Activated CD4-positive, alpha-beta T cell treated with anti-CD3 and anti-CD28 coated beads for 36 hours (primary cell): ENCODE measurements at regions of chr20 and their contacts with region 1.

Region 1: GRCh38 chr20:49982346-49983122 is at the start of gene SNAI1:
- DNase-seq: peak; percentile 89
- ATAC-seq: peak; percentile 91
- H3K4me3 Mint-ChIP-seq: peak within 1 kb of the TSS; percentile 52
- H3K27ac Mint-ChIP-seq: peak within 1 kb of the TSS; percentile 26
- H3K4me1 Mint-ChIP-seq: peaks cover 15% of the 10 kb centered on the region
- H3K27me3 Mint-ChIP-seq: peaks cover 7% of the 10 kb centered on the region
- total RNA-seq, gene SNAI1: 0.25 to 0.34 TPM

Region 2: DNA sequence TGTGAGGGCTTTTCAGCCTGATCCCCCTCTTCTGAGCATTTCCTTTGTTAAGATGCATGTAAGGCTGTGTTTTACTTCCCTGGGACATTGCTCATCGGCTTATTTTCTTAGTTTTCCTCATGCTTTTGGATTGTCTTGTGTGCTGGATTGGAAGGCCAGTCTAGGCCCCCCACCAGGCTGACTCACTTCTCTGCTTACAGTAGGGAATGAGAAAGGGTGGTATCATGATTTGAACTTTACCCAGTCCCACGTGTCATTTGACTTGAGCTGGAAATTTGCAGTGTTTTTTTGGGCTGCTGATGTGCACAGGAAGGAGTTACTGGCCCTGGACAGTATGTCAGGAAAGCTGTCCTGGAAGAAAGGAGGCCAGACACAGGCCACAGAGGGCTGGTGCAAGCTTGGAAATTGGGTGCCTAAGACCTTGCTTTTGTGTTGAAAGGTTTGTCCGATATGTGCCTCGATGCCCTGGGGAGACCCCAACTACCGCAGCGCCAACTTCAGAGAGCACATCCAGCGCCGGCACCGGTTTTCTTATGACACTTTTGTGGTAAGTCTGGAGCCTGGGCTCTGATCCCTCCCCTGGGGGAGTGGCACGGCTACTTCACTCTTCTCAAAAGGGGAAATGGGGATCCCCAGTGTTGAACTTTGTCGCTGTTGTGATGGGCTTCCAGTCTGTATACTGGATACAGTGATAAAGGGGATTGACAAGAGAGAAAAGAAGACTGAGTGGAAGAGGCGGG is 33.6 kb before region 1 on chr20:
- CTCF ChIA-PET with region 1: interaction called, 11 read pairs
- POLR2A ChIA-PET with region 1: no interaction called
- intact Hi-C with region 1: no loop called
- DNase-seq: no peak
- ATAC-seq: no peak
- H3K4me3 Mint-ChIP-seq: no peak overlapping the region
- H3K27ac Mint-ChIP-seq: no peak overlapping the region
- H3K4me1 Mint-ChIP-seq: peaks cover 20% of the 10 kb centered on the region
- H3K27me3 Mint-ChIP-seq: no peaks in the 10 kb centered on the region

Region 3: DNA sequence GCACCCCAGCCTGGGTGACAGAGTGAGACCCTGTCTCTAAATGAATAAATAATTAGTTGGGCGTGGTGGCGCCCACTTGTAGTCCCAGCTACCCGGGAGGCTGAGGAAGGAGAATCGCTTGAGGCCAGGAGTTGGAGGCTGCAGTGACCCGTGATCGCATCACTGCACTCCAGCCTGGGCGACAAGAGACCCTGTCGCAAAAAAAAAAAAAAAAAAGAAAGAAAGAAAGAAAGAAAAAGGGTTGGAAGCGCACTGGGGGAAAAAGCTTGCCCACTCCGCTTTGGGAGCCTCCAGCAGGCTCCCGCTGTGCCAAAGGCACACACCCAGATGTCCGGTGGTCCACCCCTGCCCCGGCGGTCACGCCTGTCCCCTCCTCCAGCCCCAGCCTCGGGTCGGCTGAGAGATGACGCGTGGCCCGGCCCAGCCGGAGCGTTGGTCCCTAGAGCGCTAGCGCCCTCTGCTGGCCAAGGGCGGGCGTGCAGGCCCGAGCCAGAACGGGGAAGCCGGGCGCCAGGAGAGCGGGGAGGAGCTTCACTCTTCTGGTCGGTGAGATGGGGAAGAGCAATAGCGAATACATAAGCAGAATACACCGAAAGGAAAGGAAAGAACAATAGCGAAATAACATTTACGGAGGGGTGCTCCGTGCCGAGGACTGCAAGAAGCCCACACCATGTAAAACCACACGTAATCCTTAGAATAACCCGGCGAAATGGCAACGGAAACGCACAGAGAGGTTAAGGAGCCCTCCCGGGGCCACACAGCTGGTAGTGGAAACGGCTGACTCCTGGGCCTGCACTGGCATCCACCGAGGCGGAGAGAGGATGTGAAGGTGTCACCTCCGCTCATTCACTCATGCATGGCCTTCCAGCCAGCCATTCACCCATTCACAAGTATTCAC is 88.7 kb after region 1 on chr20:
- CTCF ChIA-PET with region 1: interaction called, 224 read pairs
- POLR2A ChIA-PET with region 1: interaction called, 4 read pairs
- intact Hi-C with region 1: loop called (anchors 1 kb)
- DNase-seq: peak; percentile 95
- ATAC-seq: peak; percentile 99
- H3K4me3 Mint-ChIP-seq: peak overlapping the region; percentile 61
- H3K27ac Mint-ChIP-seq: no peak overlapping the region
- H3K4me1 Mint-ChIP-seq: peaks cover 4% of the 10 kb centered on the region
- H3K27me3 Mint-ChIP-seq: no peaks in the 10 kb centered on the region

Region 4: DNA sequence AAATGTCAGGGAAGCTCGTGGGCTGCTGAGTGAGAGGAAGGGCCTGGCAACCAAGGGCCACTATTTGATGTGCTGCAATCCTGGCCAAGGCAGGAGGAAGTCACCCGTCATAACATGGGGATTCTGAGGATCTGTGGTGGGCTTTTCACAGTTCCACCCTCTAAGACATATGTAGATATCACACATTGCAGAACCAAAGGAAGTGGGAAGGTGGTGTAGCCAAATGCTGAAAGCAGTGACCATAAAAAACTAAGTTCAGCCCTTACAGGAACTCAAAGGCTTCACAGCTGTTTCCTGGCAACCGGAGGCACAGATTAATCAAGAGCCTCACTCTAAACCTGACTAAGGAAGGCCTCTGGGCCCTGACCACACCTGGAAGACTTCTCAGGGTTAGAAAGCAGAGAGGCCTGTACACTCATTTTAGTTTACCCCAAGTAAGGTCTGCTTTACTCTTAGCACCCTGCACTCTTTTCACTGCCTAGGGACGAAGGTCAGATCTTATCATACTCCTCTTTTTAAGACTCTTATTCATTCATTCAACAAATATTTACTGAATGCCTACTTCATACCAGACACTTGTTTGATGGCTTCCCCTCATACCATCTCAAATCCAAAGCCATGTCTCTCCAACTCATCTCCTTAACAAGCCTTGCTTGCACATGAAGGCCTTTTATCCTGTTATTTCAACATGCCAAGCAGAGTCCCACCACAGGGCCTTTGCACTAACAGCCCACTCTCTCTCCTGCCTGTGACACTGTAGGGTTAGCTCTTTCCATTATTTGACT is 127.8 kb after region 1 on chr20:
- CTCF ChIA-PET with region 1: interaction called, 4 read pairs
- POLR2A ChIA-PET with region 1: interaction called, 16 read pairs
- intact Hi-C with region 1: no loop called
- DNase-seq: peak; percentile 69
- ATAC-seq: peak; percentile 49
- H3K4me3 Mint-ChIP-seq: peak overlapping the region; percentile 93
- H3K27ac Mint-ChIP-seq: peak overlapping the region; percentile 92
- H3K4me1 Mint-ChIP-seq: peaks cover 82% of the 10 kb centered on the region
- H3K27me3 Mint-ChIP-seq: no peaks in the 10 kb centered on the region

Region 5: DNA sequence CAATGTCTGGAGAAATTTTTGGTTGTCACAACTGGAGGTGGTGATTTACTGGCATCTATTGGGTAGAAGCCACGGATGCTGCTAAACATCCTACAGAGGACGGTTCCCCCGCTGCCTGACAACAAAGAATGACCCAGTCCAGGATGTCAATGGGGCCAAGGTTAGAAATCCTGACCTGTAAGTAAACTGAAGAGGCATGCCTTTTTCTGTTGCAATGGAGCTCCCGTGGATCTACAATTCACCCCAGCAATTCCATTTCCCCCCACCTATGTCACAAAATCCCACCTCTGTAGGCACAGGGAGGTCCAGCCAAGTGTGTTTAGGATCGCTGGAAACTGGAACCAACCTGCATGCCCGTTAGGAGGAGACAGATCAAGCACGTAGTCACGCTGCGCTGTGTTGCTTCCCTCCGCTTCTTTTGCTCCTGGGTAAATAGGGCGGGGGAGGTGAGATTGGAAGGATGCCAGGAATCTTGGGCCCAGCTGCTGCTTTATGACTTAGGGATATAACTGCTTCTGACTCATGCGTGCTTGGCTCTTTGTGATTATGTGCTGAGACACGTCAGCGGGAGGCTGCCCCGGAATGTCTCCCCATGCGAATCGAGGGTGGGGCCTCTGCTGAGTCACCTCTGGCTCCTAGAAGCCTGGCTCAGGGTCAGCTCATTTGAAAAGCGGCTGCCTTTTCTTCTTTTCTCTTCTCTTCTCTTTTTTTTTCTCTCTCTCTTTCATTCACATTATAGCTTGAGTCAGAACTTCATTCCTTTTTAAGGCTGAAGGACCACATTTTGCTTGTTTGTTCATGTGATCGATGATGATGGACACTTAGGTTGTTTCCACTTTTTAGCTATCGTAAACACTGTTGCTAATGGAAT is 183.4 kb after region 1 on chr20:
- CTCF ChIA-PET with region 1: interaction called, 10 read pairs
- POLR2A ChIA-PET with region 1: no interaction called
- intact Hi-C with region 1: loop called (anchors 1 kb)
- DNase-seq: peak; percentile 95
- ATAC-seq: peak; percentile 100
- H3K4me3 Mint-ChIP-seq: peak overlapping the region; percentile 58
- H3K27ac Mint-ChIP-seq: peak overlapping the region; percentile 72
- H3K4me1 Mint-ChIP-seq: peaks cover 13% of the 10 kb centered on the region
- H3K27me3 Mint-ChIP-seq: peaks cover 5% of the 10 kb centered on the region

Region 6: DNA sequence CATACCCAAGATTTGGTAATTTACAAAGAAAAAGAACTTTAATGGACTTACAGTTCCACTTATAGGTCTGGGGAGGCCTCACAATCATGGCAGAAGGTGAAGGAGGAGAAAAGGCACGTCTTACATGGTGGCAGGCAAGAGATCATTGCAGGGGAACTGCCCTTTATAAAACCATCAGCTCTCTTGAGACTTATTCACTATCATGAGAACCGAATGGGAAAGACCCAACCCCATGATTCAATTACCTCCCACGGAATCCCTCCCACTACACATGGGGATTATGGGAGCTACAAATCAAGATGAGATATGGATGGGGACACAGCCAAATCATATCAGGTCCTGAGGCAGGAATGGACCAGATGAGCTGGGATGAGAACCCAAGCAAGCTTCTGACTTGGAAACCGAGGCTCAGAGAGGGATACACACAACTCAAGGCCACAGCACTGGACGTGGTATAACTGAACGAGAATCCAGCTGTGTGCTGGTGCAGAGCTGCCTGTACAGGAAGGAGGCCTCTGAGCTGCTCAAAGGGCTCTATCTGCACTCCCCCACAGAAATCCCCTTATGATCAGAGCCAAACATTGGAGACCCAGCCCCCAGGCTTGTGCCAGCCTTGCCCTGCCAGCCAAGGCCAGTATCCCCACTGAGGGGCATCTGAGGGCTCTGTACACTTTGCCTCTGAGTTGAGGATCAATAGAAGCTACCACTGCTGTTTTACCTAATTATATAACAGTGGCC is 345.9 kb after region 1 on chr20:
- CTCF ChIA-PET with region 1: no interaction called
- POLR2A ChIA-PET with region 1: no interaction called
- intact Hi-C with region 1: no loop called
- DNase-seq: no peak
- ATAC-seq: no peak
- H3K4me3 Mint-ChIP-seq: no peak overlapping the region
- H3K27ac Mint-ChIP-seq: no peak overlapping the region
- H3K4me1 Mint-ChIP-seq: no peaks in the 10 kb centered on the region
- H3K27me3 Mint-ChIP-seq: peaks cover 3% of the 10 kb centered on the region

Region 7: GRCh38 chr20:50460460-50461267 is 478.1 kb after region 1 on chr20:
- CTCF ChIA-PET with region 1: no interaction called
- POLR2A ChIA-PET with region 1: no interaction called
- intact Hi-C with region 1: loop called (anchors 5 to 10 kb)
- DNase-seq: peak; percentile 91
- ATAC-seq: peak; percentile 90
- H3K4me3 Mint-ChIP-seq: no peak overlapping the region
- H3K27ac Mint-ChIP-seq: no peak overlapping the region
- H3K4me1 Mint-ChIP-seq: peaks cover 8% of the 10 kb centered on the region
- H3K27me3 Mint-ChIP-seq: peaks cover 6% of the 10 kb centered on the region